A673 (cell line): ENCODE measurements at regions of chr3 and their contacts with region 1.

Region 1: GRCh38 chr3:25594007-25594502 is 70.7 kb downstream of the TOP2B start:
- DNase-seq: peak; percentile 83
- H3K4me3 ChIP-seq: no peak overlapping the region
- H3K27ac ChIP-seq: no peak overlapping the region
- H3K4me1 ChIP-seq: peaks cover 14% of the 10 kb centered on the region
- H3K27me3 ChIP-seq: no peaks in the 10 kb centered on the region
- CTCF ChIP-seq: peak; percentile 85; the same call in 1 of the 2 replicates

Region 2: GRCh38 chr3:24680214-24680967 is 913.7 kb before region 1 on chr3:
- CTCF ChIA-PET with region 1: interaction called, 5 read pairs
- POLR2A ChIA-PET with region 1: no interaction called
- intact Hi-C with region 1: loop called (anchors 2 kb)
- DNase-seq: peak; percentile 69
- H3K4me3 ChIP-seq: no peak overlapping the region
- H3K27ac ChIP-seq: no peak overlapping the region
- H3K4me1 ChIP-seq: no peaks in the 10 kb centered on the region
- H3K27me3 ChIP-seq: no peaks in the 10 kb centered on the region
- CTCF ChIP-seq: peak; percentile 95

Region 3: GRCh38 chr3:24963762-24964625 is 630.1 kb before region 1 on chr3:
- CTCF ChIA-PET with region 1: no interaction called
- POLR2A ChIA-PET with region 1: no interaction called
- intact Hi-C with region 1: loop called (anchors 2 kb)
- DNase-seq: peak; percentile 33
- H3K4me3 ChIP-seq: no peak overlapping the region
- H3K27ac ChIP-seq: no peak overlapping the region
- H3K4me1 ChIP-seq: no peaks in the 10 kb centered on the region
- H3K27me3 ChIP-seq: no peaks in the 10 kb centered on the region
- CTCF ChIP-seq: peak; percentile 56

Region 4: DNA sequence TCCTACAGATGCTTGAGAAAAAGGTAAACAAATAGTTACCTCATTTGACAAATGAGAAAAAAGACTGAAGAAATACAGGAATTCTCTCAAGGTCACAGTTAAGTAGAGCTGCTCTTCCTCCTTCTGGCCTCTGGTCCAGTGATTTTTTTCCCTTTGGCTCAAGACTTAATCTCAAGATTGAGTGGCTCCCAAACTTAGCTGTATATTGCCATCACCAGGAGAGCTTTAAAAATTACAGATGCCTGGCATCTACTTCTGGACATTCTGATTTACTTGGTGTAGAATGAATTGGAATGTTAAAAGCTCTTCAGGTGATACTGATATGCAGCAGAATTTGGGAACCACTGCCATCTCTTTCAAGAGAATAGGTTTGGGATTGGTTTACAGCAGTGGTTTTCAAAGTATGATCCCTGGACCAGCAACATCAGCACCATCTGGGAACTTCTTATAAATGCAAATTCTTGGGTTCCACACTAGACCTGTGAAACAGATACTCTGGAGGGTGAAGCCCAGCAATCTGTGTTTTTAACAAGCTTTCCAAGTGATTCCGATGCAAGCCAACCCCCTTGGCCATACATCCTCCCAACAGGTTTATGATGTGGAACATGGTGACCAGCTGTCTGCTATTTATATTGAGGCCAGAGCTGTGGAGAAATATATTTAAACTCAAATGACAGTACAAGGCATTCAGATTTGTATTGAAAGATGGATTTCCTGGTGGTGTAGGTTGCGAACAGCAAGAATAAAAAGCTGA is 498.9 kb before region 1 on chr3:
- CTCF ChIA-PET with region 1: no interaction called
- POLR2A ChIA-PET with region 1: no interaction called
- intact Hi-C with region 1: loop called (anchors 10 kb)
- DNase-seq: no peak
- H3K4me3 ChIP-seq: no peak overlapping the region
- H3K27ac ChIP-seq: no peak overlapping the region
- H3K4me1 ChIP-seq: no peaks in the 10 kb centered on the region
- H3K27me3 ChIP-seq: peaks cover 31% of the 10 kb centered on the region
- CTCF ChIP-seq: no peak

Region 5: DNA sequence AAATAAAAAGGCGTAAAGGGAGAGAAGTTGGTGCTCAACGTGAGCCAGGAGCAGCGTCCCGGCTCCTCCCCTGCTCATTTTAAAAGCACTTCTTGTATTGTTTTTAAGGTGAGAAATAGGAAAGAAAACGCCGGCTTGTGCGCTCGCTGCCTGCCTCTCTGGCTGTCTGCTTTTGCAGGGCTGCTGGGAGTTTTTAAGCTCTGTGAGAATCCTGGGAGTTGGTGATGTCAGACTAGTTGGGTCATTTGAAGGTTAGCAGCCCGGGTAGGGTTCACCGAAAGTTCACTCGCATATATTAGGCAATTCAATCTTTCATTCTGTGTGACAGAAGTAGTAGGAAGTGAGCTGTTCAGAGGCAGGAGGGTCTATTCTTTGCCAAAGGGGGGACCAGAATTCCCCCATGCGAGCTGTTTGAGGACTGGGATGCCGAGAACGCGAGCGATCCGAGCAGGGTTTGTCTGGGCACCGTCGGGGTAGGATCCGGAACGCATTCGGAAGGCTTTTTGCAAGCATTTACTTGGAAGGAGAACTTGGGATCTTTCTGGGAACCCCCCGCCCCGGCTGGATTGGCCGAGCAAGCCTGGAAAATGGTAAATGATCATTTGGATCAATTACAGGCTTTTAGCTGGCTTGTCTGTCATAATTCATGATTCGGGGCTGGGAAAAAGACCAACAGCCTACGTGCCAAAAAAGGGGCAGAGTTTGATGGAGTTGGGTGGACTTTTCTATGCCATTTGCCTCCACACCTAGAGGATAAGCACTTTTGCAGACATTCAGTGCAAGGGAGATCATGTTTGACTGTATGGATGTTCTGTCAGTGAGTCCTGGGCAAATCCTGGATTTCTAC is 165.9 kb before region 1 on chr3 and contains the start of gene RARB:
- CTCF ChIA-PET with region 1: no interaction called
- POLR2A ChIA-PET with region 1: no interaction called
- intact Hi-C with region 1: loop called (anchors 10 kb)
- DNase-seq: peak; percentile 89
- H3K4me3 ChIP-seq: peak within 1 kb of the TSS; percentile 56
- H3K27ac ChIP-seq: no peak within 1 kb of the TSS
- H3K4me1 ChIP-seq: peaks cover 5% of the 10 kb centered on the region
- H3K27me3 ChIP-seq: peaks cover 40% of the 10 kb centered on the region
- CTCF ChIP-seq: no peak
- total RNA-seq, gene RARB: 0.24 and 0.44 TPM in 2 replicates

Region 6: GRCh38 chr3:25755257-25755656 is 161.2 kb after region 1 on chr3:
- CTCF ChIA-PET with region 1: no interaction called
- POLR2A ChIA-PET with region 1: no interaction called
- intact Hi-C with region 1: no loop called
- DNase-seq: no peak
- H3K4me3 ChIP-seq: no peak overlapping the region
- H3K27ac ChIP-seq: no peak overlapping the region
- H3K4me1 ChIP-seq: no peaks in the 10 kb centered on the region
- H3K27me3 ChIP-seq: no peaks in the 10 kb centered on the region
- CTCF ChIP-seq: no peak